Activated T-helper 2 cell treated with anti-CD3 and anti-CD28 coated beads, Interferon-gamma antibody, Interleukin-2, Interleukin-4, amounts not matched to agents 10 μg/mL and 5 μg/mL and 100 μg/mL, durations not matched to agents 14 hours and 24 hours and 36 hours (primary cell): ENCODE measurements at regions of chr14 and their contacts with region 1.

Region 1: GRCh38 chr14:102555264-102555831 is 37.1 kb upstream of the RCOR1 start:
- DNase-seq: peak; percentile 59
- H3K4me3 Mint-ChIP-seq: peak overlapping the region; percentile 60
- H3K27ac Mint-ChIP-seq: peak overlapping the region; percentile 38
- H3K4me1 Mint-ChIP-seq: peaks cover 2% of the 10 kb centered on the region
- H3K27me3 Mint-ChIP-seq: no peaks in the 10 kb centered on the region

Region 2: GRCh38 chr14:102500158-102500662 is 55.1 kb before region 1 on chr14:
- intact Hi-C with region 1: no loop called
- DNase-seq: no peak
- H3K4me3 Mint-ChIP-seq: no peak overlapping the region
- H3K27ac Mint-ChIP-seq: peak overlapping the region; percentile 33
- H3K4me1 Mint-ChIP-seq: peaks cover 10% of the 10 kb centered on the region
- H3K27me3 Mint-ChIP-seq: no peaks in the 10 kb centered on the region

Region 3: GRCh38 chr14:102524466-102525218 is 30.7 kb before region 1 on chr14:
- intact Hi-C with region 1: loop called (anchors 2 kb)
- DNase-seq: peak; percentile 95
- H3K4me3 Mint-ChIP-seq: peak overlapping the region; percentile 94
- H3K27ac Mint-ChIP-seq: peak overlapping the region; percentile 90
- H3K4me1 Mint-ChIP-seq: peaks cover 15% of the 10 kb centered on the region
- H3K27me3 Mint-ChIP-seq: no peaks in the 10 kb centered on the region

Region 4: DNA sequence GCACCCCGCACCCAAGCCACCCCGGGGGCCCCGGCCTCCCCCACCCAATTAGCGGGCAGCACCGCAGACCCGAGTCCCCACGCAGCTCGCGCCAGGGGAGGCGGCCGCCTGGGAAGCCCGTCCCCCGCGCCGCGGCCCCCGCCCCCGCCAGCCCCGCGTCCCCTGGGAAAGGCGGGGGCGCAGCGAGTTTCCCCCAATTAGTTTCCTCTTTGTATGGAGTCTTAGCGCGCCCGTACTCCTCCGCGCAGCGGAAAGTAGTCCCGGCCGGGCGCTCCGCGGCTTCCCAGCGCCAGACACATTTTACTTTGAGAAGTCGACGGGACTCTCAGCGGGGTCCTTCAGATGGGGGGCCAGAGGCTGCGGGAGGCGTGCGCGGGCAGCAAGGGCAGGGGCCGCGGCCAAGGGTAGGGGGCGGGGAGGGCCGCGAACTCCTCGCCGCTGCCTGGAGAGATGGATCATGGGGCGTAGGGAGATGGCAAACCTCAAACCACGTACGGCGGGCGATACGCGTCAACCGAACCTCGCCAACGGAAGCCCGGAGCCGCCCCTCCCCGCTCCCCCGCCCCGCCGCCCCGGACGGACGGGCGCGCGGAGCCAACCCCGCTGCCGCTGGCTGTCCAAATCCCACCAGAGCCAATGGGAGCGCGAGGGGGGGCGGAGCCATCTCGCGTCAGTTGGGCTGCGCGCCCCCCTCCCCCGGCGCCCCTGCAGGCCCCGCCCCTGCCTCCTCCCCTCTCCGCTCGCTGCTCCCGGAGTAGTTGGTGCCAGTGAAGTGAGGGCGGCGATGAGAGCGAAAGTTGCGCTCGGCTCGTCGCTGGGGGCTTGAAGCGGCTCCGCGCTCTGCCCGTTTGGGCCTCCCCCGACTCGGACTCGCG is 36.8 kb after region 1 on chr14 and contains the start of gene RCOR1:
- intact Hi-C with region 1: no loop called
- DNase-seq: peak; percentile 97
- H3K4me3 Mint-ChIP-seq: peak within 1 kb of the TSS; percentile 91
- H3K27ac Mint-ChIP-seq: peak within 1 kb of the TSS; percentile 95
- H3K4me1 Mint-ChIP-seq: peaks cover 21% of the 10 kb centered on the region
- H3K27me3 Mint-ChIP-seq: no peaks in the 10 kb centered on the region
- total RNA-seq, gene RCOR1: 22.2 and 24.3 TPM in 2 replicates